HEK293T (cell line): ENCODE measurements at regions of chr6 and their contacts with region 1.

Region 1: GRCh38 chr6:3748208-3749066 is 3.1 kb downstream of the PXDC1 start:
- DNase-seq: peak; percentile 68

Region 2: GRCh38 chr6:3697609-3698008 is 50.8 kb before region 1 on chr6:
- CTCF ChIA-PET with region 1: no interaction called
- POLR2A ChIA-PET with region 1: no interaction called
- DNase-seq: no peak

Region 3: GRCh38 chr6:3789018-3789895 is 40.8 kb after region 1 on chr6:
- CTCF ChIA-PET with region 1: no interaction called
- POLR2A ChIA-PET with region 1: no interaction called
- DNase-seq: no peak

Region 4: GRCh38 chr6:3929281-3929798 is 180.9 kb after region 1 on chr6:
- CTCF ChIA-PET with region 1: interaction called, 19 read pairs
- POLR2A ChIA-PET with region 1: interaction called, 4 read pairs
- DNase-seq: no peak

Region 5: DNA sequence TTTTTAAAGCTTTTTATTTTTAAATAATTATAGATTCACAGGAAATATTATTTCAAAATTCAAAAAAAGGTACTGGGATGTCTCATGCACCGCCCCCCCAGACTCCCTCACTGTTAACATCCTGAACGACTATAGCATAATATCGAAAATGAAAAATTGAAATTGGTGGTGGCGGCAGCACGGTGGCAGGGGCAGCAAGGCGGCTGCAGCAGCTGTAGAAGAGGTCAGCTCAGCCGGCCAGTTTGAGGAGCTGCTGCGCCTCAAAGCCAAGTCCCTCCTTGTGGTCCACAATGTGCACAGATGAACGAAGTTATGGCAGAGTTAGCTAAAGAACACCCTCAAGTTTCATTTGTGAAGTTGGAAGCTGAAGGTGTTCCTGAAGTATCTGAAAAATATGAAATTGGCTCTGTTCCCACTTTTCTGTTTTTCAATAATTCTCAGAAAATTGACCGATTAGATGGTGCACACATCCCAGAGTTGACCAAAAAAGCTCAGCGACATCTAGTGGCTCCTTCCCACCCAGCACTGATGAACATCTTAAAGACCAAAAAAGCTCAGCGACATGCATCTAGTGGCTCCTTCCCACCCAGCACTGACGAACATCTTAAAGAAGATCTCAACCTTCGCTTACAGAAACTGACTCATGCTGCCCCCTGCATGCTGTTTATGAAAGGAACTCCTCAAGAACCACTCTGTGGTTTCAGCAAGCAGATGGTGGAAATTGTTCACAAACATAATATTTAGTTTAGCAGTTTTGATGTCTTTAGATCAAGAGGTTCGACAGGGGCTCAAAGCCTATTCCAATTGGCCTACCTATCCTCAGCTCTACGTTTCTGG is 229.7 kb after region 1 on chr6:
- CTCF ChIA-PET with region 1: interaction called, 21 read pairs
- POLR2A ChIA-PET with region 1: no interaction called
- DNase-seq: peak; percentile 42

Region 6: GRCh38 chr6:3990692-3991501 is 242.5 kb after region 1 on chr6:
- CTCF ChIA-PET with region 1: interaction called, 16 read pairs
- POLR2A ChIA-PET with region 1: no interaction called
- DNase-seq: peak; percentile 84